Esophagus muscularis mucosa (tissue), 4 donors: ENCODE measurements at regions of chr18 and their contacts with region 1.

Region 1: DNA sequence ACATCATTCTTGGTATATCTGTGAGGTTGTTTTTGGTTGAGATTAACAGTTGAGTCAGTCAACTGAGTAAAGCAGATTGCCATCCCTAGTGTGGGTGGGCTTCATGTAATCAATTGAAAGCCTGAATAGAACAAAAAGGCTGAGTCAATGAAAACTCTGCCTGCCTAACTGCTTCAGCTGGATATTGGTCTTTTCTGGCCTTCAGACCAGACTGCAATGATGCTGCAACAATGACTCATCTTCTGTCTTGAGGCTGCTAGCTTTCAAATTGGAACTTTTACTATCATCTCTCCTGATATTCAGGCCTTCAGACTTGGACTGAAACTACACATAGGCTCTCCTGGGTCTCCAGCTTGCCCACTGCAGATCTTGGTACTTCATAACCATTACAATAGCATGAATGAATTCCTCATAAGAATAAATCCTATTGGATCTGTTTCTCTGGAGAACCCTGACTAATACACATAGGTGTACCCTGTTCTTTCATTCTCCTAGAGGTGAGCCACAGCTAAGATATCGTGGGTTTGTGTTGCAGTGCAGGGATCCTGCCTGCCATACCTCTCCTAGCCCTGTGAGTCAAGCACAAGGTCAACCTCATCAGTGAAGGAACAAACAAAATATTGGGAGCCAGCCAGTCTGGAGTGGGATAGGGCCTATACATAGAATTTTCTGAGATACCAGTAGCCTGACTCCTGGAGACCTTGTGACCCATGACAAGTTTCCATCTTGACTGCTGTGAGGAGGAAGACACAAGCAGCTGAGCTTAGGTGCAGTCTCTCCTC is 473.8 kb downstream of the DCC start:
- DNase-seq: no peak
- H3K4me3 ChIP-seq: no peak overlapping the region
- H3K27ac ChIP-seq: no peak overlapping the region
- H3K4me1 ChIP-seq: no peaks in the 10 kb centered on the region
- H3K27me3 ChIP-seq: no peaks in the 10 kb centered on the region
- CTCF ChIP-seq: no peak
- EP300 ChIP-seq: no peak
- POLR2A ChIP-seq: no peak

Region 2: DNA sequence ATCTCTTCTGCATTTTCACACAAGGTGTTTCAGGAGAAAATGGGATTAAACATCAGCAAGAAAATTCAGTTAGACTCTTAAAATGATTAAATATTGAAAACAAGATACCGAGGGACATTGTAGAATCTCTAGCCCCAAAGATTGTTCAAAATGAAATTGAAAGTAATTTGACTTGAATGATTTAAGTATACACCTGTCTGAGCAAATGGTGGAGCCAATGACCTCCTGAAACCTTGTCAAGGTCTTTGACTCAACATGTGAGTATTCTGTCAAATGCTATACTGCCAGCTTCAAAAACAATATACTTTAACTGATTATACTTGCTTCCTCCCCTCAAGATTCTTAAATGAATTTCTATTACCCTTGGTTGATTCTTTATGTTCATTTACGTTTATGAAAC is 62.8 kb before region 1 on chr18:
- intact Hi-C with region 1: loop called (anchors 10 kb)
- DNase-seq: no peak
- H3K4me3 ChIP-seq: no peak overlapping the region
- H3K27ac ChIP-seq: no peak overlapping the region
- H3K4me1 ChIP-seq: no peaks in the 10 kb centered on the region
- H3K27me3 ChIP-seq: no peaks in the 10 kb centered on the region
- CTCF ChIP-seq: no peak
- EP300 ChIP-seq: no peak
- POLR2A ChIP-seq: no peak